Activated CD4-positive, alpha-beta memory T cell treated with anti-CD3 and anti-CD28 coated beads for 36 hours (primary cell): ENCODE measurements at regions of chr20 and their contacts with region 1.

Region 1: DNA sequence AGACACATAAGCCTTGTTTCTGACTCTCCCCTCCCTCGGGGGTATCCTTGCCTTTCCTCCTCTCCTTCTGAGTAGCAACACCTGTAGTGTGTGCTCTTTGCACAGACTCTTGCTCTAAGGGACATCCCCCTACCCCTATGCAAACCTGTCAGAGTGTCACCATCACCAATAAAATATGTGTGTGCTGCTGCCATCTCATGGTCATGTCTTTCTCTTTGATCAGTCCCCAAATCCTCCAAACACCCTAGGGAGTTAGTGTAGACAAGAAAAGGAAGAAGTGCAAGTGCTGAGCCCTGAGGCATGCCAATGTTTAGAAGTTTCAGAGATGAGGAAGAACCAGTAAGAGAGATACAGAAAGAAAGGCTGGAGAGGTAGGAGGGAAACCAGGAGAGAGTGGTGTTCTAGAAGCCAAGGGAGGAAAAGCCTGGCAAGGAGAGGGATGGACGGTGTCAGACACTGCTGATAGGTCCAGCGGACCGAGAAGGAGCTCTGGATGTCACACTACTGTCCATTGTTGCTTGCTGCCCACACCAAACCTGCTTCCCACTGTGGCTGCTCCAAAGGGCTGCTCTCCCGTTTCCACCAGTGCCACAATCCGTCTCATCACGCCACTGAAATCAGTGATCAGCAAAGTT is 16.4 kb downstream of the TRMT6 start:
- DNase-seq: peak; percentile 26
- H3K4me3 Mint-ChIP-seq: no peak overlapping the region
- H3K27ac Mint-ChIP-seq: no peak overlapping the region
- H3K4me1 Mint-ChIP-seq: no peaks in the 10 kb centered on the region
- H3K27me3 Mint-ChIP-seq: no peaks in the 10 kb centered on the region

Region 2: DNA sequence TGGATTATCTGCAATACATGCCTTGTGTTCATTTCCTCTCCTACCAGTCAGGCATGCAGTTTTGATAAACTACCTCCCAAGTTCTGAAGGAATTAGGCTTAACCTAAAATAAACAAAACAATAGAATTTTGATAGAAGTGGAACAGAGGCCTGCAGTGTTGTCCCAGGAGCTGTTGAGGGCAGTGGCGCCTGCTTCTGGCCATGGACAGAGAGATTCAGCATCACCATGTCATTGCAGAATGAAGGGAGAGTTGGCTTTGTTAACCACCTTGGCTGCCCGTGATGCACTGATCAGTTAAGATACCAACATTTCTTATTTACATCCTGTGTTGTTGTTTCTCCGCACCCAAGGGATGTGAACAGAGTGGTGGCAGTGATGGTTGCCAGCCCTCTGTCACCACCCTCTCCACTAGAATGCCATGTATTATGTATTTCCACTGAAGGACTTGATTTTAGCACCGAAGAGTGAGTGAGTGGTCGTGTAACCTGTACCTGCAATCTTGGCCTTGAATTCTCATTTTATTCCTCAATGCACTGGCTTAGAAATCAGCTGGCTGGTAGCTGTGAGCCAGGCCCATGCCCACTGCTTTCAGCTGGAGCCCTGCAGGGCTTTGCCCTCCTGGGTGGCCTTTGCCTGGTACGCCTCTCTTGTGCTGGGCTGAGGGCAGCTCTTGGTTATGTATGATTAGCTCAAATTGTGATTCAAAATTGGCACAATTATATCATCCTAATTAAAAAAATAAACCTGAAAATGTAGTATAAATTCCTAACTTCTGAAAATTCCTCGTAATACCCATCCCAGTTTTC is 127.3 kb before region 1 on chr20:
- CTCF ChIA-PET with region 1: no interaction called
- POLR2A ChIA-PET with region 1: no interaction called
- intact Hi-C with region 1: loop called (anchors 5 kb)
- DNase-seq: no peak
- H3K4me3 Mint-ChIP-seq: no peak overlapping the region
- H3K27ac Mint-ChIP-seq: peak overlapping the region; percentile 3
- H3K4me1 Mint-ChIP-seq: peaks cover 31% of the 10 kb centered on the region
- H3K27me3 Mint-ChIP-seq: no peaks in the 10 kb centered on the region

Region 3: DNA sequence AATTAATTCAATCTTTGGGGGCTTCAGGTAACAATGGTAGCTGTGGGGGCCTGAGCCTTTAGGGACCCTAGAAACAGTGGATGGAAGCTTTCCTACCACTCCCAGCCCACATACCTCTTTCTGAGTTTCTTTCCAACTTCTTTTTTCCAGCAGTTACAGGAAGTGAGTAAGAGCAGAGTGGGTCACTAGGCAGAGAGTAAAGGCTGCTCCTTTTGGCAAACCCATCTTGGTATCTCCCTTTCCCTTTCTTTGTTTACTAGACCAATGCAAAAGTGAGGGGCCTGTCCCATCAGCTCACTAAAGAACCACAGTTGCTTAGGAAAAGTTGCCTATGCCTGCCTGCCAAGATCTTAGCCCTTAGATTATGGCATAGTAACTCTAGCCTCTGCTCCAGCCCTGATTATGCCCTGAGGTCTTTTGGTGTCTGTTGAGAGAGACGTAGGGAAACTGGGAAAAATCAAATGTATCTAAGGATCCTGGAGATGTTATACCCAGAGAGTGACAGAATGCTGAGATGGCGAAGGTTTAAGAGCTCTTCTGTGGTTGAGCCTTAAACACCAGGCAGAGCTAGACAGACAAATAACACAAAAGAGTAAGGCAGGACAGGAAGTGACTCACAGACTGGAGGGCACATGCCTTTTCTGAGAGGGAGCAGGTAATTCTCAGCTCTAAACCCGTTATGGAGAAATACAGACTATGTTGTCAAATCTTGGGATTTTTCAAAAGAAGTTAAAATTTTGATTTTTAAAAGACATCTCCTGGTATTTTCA is 14.9 kb before region 1 on chr20:
- CTCF ChIA-PET with region 1: no interaction called
- POLR2A ChIA-PET with region 1: no interaction called
- intact Hi-C with region 1: no loop called
- DNase-seq: peak; percentile 30
- H3K4me3 Mint-ChIP-seq: no peak overlapping the region
- H3K27ac Mint-ChIP-seq: peak overlapping the region; percentile 19
- H3K4me1 Mint-ChIP-seq: peaks cover 20% of the 10 kb centered on the region
- H3K27me3 Mint-ChIP-seq: peaks cover 2% of the 10 kb centered on the region